Calu3 (cell line): ENCODE measurements at regions of chr2 and their contacts with region 1.

Region 1: GRCh38 chr2:186612555-186613440 is 22.9 kb downstream of the ITGAV start:
- DNase-seq: no peak
- H3K4me3 Mint-ChIP-seq: no peak overlapping the region
- H3K27ac Mint-ChIP-seq: peak overlapping the region; percentile 31
- H3K4me1 Mint-ChIP-seq: peaks cover 13% of the 10 kb centered on the region
- H3K27me3 Mint-ChIP-seq: no peaks in the 10 kb centered on the region
- CTCF ChIP-seq: no peak

Region 2: DNA sequence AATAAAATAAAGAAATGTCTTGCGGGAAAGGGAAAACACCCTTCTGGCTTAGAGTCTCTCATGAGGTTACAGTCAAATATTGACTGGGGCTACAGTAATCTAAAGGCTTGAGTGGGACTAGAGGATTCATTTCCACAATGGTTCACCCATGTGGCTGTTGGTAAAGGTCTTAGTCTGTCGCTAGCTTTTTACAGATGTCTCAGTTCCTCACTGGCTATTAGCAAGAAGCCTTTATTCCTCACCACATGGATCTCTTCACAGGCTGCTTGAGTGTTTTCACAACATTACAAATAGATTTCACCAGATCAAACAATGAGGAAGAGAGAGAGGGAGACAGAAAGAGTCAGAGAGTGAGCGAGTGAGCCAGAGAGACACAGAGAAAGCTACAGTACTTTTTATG is 135.0 kb before region 1 on chr2:
- CTCF ChIA-PET with region 1: no interaction called
- intact Hi-C with region 1: no loop called
- DNase-seq: no peak
- H3K4me3 Mint-ChIP-seq: no peak overlapping the region
- H3K27ac Mint-ChIP-seq: no peak overlapping the region
- H3K4me1 Mint-ChIP-seq: peaks cover 7% of the 10 kb centered on the region
- H3K27me3 Mint-ChIP-seq: no peaks in the 10 kb centered on the region
- CTCF ChIP-seq: no peak

Region 3: GRCh38 chr2:186599186-186599778 is 13.5 kb before region 1 on chr2:
- CTCF ChIA-PET with region 1: interaction called, 6 read pairs
- intact Hi-C with region 1: loop called (anchors 2 kb)
- DNase-seq: no peak
- H3K4me3 Mint-ChIP-seq: no peak overlapping the region
- H3K27ac Mint-ChIP-seq: peak overlapping the region; percentile 64
- H3K4me1 Mint-ChIP-seq: peaks cover 44% of the 10 kb centered on the region
- H3K27me3 Mint-ChIP-seq: no peaks in the 10 kb centered on the region
- CTCF ChIP-seq: no peak

Region 4: DNA sequence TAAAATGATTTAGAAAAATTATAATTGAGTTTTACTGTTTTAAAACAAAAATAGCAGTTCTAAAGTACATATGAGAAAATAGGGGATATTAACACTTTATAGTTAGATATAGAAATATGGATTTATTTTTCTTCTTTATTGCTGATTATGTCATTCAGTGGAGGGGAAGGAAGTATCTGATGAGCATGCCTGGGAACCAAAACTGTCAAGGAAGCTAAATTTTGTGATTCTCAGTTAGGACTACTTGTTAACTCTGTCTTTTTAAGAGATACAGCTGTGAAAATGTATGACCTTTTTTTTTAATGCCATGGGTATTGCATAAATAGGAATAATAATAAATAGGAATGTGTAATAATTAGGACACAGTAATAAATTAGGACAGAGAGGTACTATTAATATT is 21.9 kb after region 1 on chr2:
- CTCF ChIA-PET with region 1: no interaction called
- intact Hi-C with region 1: loop called (anchors 2 kb)
- DNase-seq: no peak
- H3K4me3 Mint-ChIP-seq: no peak overlapping the region
- H3K27ac Mint-ChIP-seq: no peak overlapping the region
- H3K4me1 Mint-ChIP-seq: no peaks in the 10 kb centered on the region
- H3K27me3 Mint-ChIP-seq: no peaks in the 10 kb centered on the region
- CTCF ChIP-seq: no peak

Region 5: DNA sequence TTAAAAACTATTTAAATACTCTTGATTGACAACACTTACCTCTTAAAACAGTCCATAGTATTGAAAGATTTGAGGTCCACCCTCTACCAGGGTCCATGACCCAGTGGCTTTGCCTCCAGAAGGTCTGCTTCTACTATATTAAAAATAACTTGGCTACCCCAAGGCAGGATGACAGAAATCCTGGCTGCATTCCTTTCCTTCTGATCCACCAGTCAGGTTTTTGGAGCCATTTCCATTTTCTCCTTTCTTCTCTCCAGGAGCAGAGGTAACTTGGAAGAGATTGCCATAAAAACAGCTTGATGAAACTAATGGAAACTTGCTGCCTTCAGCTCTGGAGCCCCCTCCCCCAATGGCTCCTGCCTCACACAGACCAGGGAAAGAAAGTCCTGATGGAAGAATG is 78.4 kb after region 1 on chr2:
- CTCF ChIA-PET with region 1: no interaction called
- intact Hi-C with region 1: no loop called
- DNase-seq: no peak
- H3K4me3 Mint-ChIP-seq: no peak overlapping the region
- H3K27ac Mint-ChIP-seq: no peak overlapping the region
- H3K4me1 Mint-ChIP-seq: peaks cover 38% of the 10 kb centered on the region
- H3K27me3 Mint-ChIP-seq: no peaks in the 10 kb centered on the region
- CTCF ChIP-seq: no peak